ENCODE measurements at regions of chr13 and their contacts with region 1.

Region 1: DNA sequence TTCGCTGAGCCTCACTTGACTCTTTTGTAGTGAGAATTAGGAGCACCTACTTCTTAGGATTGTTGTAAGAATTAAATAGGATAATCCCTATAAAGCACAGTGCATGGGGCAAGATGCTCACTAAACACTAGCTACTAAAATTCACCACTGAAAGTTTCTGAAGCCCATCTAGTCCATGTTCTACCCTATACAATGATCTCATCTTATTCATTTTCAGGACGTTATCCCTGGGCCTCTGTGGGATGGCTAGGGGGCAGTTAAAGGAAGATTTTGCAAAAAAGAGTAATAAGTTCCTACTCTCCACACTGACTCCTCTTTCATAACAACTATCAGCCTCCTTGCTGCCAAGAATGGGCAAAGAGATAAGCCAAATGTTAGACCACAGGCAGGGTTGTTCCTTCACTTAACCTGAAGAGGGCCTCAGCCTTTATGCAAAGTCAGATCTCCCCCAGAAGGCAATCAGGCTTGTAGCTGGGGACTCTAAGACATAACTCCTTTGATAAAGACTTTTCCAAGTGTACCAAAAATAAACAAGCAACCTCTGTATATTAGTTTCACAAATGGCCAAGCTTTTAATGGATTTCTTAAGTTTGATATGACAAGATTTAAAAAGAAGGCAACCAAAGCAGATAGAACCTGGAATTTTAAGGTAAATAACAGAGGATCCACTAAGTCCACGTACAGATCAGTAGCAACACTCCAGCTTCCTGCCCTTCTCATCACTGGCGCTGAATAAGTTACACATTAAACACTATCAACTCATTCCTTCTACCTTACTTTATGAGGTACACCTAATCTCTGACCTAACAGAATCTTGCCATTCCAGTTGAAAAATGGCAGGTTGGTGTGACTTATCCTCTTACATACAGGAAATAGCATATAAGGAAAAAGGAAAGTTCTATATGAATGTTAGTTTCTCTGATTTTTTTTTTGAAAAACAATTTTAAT is 44.4 kb downstream of the ELF1 start:
- DNase-seq: peak; percentile 54 to 75 (median 61)
- H3K4me3 ChIP-seq: no peak overlapping the region
- H3K4me3 Mint-ChIP-seq: peak overlapping the region; percentile 43 to 97 (median 78)
- H3K27ac ChIP-seq: peak overlapping the region; percentile 19
- H3K27ac Mint-ChIP-seq: peak overlapping the region; percentile 84 to 98 (median 86)
- H3K4me1 ChIP-seq: peaks cover 85% of the 10 kb centered on the region
- H3K4me1 Mint-ChIP-seq: peaks cover 68 to 94% (median 80%) of the 10 kb centered on the region in 4 donors
- H3K27me3 ChIP-seq: no peaks in the 10 kb centered on the region
- H3K27me3 Mint-ChIP-seq: no peaks in the 10 kb centered on the region

Region 2: GRCh38 chr13:40764587-40765403 is 209.9 kb before region 1 on chr13:
- CTCF ChIA-PET with region 1: no interaction called
- POLR2A ChIA-PET with region 1: no interaction called
- intact Hi-C with region 1: no loop called
- DNase-seq: peak in 1 of 5 donors; percentile 65
- H3K4me3 ChIP-seq: no peak overlapping the region
- H3K4me3 Mint-ChIP-seq: peak overlapping the region in 3 of 8 donors; percentile 28 to 43 (median 29)
- H3K27ac ChIP-seq: peak overlapping the region; percentile 15
- H3K27ac Mint-ChIP-seq: peak overlapping the region; percentile 9 to 86 (median 71)
- H3K4me1 ChIP-seq: peaks cover 30% of the 10 kb centered on the region
- H3K4me1 Mint-ChIP-seq: peaks cover 31 to 34% (median 34%) of the 10 kb centered on the region in 4 donors
- H3K27me3 ChIP-seq: no peaks in the 10 kb centered on the region
- H3K27me3 Mint-ChIP-seq: no peaks in the 10 kb centered on the region

Region 3: DNA sequence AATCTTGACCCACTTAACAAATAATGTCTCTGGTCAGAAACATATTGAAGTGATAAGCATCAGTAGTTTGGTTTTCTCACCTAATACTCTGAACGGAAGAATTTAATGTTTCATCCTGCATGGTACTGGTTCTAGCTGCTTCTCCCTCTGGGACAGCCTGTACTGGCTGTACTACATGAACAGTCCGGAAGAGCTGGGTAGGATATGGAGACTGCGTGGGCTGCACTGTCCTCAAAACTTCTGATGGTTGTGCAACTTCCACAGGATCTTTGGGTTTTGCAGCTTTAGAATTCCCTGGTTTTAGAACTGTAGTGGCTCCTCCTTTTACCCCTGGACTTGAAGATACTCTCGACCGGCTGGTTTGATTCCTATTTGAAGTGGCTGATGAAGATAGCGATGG is 33.9 kb before region 1 on chr13:
- CTCF ChIA-PET with region 1: interaction called, 3 read pairs
- POLR2A ChIA-PET with region 1: interaction called, 4 read pairs
- intact Hi-C with region 1: loop called (anchors 5 kb)
- DNase-seq: no peak
- H3K4me3 ChIP-seq: no peak overlapping the region
- H3K4me3 Mint-ChIP-seq: no peak overlapping the region
- H3K27ac ChIP-seq: no peak overlapping the region
- H3K27ac Mint-ChIP-seq: peak overlapping the region in 4 of 7 donors; percentile 12 to 57 (median 32)
- H3K4me1 ChIP-seq: peaks cover 13% of the 10 kb centered on the region
- H3K4me1 Mint-ChIP-seq: peaks cover 26 to 53% (median 37%) of the 10 kb centered on the region in 4 donors
- H3K27me3 ChIP-seq: no peaks in the 10 kb centered on the region
- H3K27me3 Mint-ChIP-seq: no peaks in the 10 kb centered on the region

Region 4: DNA sequence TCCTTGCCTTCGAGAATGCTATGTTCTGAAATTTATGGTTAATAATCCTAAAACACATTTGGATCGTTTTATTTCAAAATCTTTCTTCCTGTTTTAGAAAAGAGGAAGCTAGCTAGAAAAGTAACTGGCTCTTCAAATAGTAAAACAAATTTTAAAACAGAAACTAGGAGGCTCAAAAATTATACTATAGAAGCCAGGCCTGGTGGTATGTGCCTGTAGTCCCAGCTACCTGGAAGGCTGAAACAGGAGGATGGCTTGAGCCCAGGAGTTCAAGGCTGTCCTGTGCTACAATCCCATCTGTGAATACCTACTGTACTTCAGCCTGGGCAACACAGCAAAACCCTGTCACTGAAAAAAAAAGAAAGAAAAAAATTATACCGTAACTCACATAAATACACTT is 13.5 kb before region 1 on chr13:
- CTCF ChIA-PET with region 1: interaction called, 6 read pairs
- POLR2A ChIA-PET with region 1: interaction called, 37 read pairs
- intact Hi-C with region 1: loop called (anchors 2 kb)
- DNase-seq: no peak
- H3K4me3 ChIP-seq: no peak overlapping the region
- H3K4me3 Mint-ChIP-seq: peak overlapping the region in 6 of 8 donors; percentile 52 to 79 (median 68)
- H3K27ac ChIP-seq: no peak overlapping the region
- H3K27ac Mint-ChIP-seq: peak overlapping the region in 6 of 7 donors; percentile 9 to 88 (median 50)
- H3K4me1 ChIP-seq: peaks cover 68% of the 10 kb centered on the region
- H3K4me1 Mint-ChIP-seq: peaks cover 59 to 88% (median 72%) of the 10 kb centered on the region in 4 donors
- H3K27me3 ChIP-seq: no peaks in the 10 kb centered on the region
- H3K27me3 Mint-ChIP-seq: no peaks in the 10 kb centered on the region

Region 5: GRCh38 chr13:40992678-40993518 is 18.2 kb after region 1 on chr13:
- CTCF ChIA-PET with region 1: interaction called, 123 read pairs
- POLR2A ChIA-PET with region 1: interaction called, 13 read pairs
- intact Hi-C with region 1: loop called (anchors 1 kb)
- DNase-seq: no peak
- H3K4me3 ChIP-seq: no peak overlapping the region
- H3K4me3 Mint-ChIP-seq: peak overlapping the region in 6 of 8 donors; percentile 9 to 65 (median 35)
- H3K27ac ChIP-seq: peak overlapping the region; percentile 41
- H3K27ac Mint-ChIP-seq: peak overlapping the region; percentile 65 to 94 (median 85)
- H3K4me1 ChIP-seq: peaks cover 93% of the 10 kb centered on the region
- H3K4me1 Mint-ChIP-seq: peaks cover 54 to 87% (median 69%) of the 10 kb centered on the region in 4 donors
- H3K27me3 ChIP-seq: no peaks in the 10 kb centered on the region
- H3K27me3 Mint-ChIP-seq: no peaks in the 10 kb centered on the region

Region 6: DNA sequence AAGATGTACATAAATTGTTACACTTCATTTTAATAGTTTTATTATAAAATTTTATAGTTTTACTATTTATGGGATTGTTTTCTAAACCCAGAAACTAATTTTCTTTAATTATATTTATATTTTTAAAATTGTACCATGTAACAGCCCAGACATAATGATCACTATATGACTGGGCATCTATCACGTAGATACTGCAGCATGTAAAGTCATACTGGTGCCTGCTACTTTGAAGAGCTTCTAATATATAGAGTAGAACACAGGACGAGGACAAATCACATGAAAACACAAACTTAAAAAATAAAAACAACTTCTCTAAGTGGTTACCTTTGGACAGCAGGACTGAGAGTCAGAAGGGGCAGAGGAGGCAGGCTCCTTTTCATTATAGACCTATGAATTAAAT is 39.1 kb after region 1 on chr13:
- CTCF ChIA-PET with region 1: interaction called, 25 read pairs
- POLR2A ChIA-PET with region 1: interaction called, 226 read pairs
- intact Hi-C with region 1: loop called (anchors 1 kb)
- DNase-seq: no peak
- H3K4me3 ChIP-seq: no peak overlapping the region
- H3K4me3 Mint-ChIP-seq: peak overlapping the region; percentile 77 to 94 (median 92)
- H3K27ac ChIP-seq: peak overlapping the region; percentile 32
- H3K27ac Mint-ChIP-seq: peak overlapping the region; percentile 47 to 93 (median 89)
- H3K4me1 ChIP-seq: peaks cover 68% of the 10 kb centered on the region
- H3K4me1 Mint-ChIP-seq: peaks cover 37 to 68% (median 47%) of the 10 kb centered on the region in 4 donors
- H3K27me3 ChIP-seq: no peaks in the 10 kb centered on the region
- H3K27me3 Mint-ChIP-seq: no peaks in the 10 kb centered on the region

Region 7: GRCh38 chr13:41019011-41019487 is 44.3 kb after region 1 on chr13 and contains the start of gene ELF1:
- CTCF ChIA-PET with region 1: interaction called, 25 read pairs
- POLR2A ChIA-PET with region 1: interaction called, 226 read pairs
- intact Hi-C with region 1: loop called (anchors 1 kb)
- DNase-seq: peak; percentile 74 to 89 (median 80)
- H3K4me3 ChIP-seq: peak within 1 kb of the TSS; percentile 65 to 72
- H3K4me3 Mint-ChIP-seq: peak within 1 kb of the TSS; percentile 83 to 98 (median 95)
- H3K27ac ChIP-seq: peak within 1 kb of the TSS; percentile 85
- H3K27ac Mint-ChIP-seq: peak within 1 kb of the TSS; percentile 90 to 99 (median 96)
- H3K4me1 ChIP-seq: peaks cover 34% of the 10 kb centered on the region
- H3K4me1 Mint-ChIP-seq: peaks cover 26 to 39% (median 33%) of the 10 kb centered on the region in 4 donors
- H3K27me3 ChIP-seq: no peaks in the 10 kb centered on the region
- H3K27me3 Mint-ChIP-seq: no peaks in the 10 kb centered on the region
- total RNA-seq, gene ELF1: 188 to 192 TPM

Region 8: GRCh38 chr13:41029629-41030028 is 54.9 kb after region 1 on chr13:
- CTCF ChIA-PET with region 1: interaction called, 12 read pairs
- POLR2A ChIA-PET with region 1: no interaction called
- intact Hi-C with region 1: no loop called
- DNase-seq: peak in 1 of 5 donors; percentile 16
- H3K4me3 ChIP-seq: no peak overlapping the region
- H3K4me3 Mint-ChIP-seq: no peak overlapping the region
- H3K27ac ChIP-seq: no peak overlapping the region
- H3K27ac Mint-ChIP-seq: no peak overlapping the region
- H3K4me1 ChIP-seq: peaks cover 5% of the 10 kb centered on the region
- H3K4me1 Mint-ChIP-seq: peaks cover 10 to 18% (median 14%) of the 10 kb centered on the region in 4 donors
- H3K27me3 ChIP-seq: no peaks in the 10 kb centered on the region
- H3K27me3 Mint-ChIP-seq: no peaks in the 10 kb centered on the region

Region 9: GRCh38 chr13:41117869-41118268 is 143.1 kb after region 1 on chr13:
- CTCF ChIA-PET with region 1: no interaction called
- POLR2A ChIA-PET with region 1: no interaction called
- intact Hi-C with region 1: no loop called
- DNase-seq: no peak
- H3K4me3 ChIP-seq: no peak overlapping the region
- H3K4me3 Mint-ChIP-seq: no peak overlapping the region
- H3K27ac ChIP-seq: no peak overlapping the region
- H3K27ac Mint-ChIP-seq: peak overlapping the region in 1 of 7 donors; percentile 48
- H3K4me1 ChIP-seq: peaks cover 4% of the 10 kb centered on the region
- H3K4me1 Mint-ChIP-seq: peaks cover 5 to 6% (median 5%) of the 10 kb centered on the region in 4 donors
- H3K27me3 ChIP-seq: no peaks in the 10 kb centered on the region
- H3K27me3 Mint-ChIP-seq: no peaks in the 10 kb centered on the region